ENCODE measurements at regions of chr4 and their contacts with region 1.

Region 1: DNA sequence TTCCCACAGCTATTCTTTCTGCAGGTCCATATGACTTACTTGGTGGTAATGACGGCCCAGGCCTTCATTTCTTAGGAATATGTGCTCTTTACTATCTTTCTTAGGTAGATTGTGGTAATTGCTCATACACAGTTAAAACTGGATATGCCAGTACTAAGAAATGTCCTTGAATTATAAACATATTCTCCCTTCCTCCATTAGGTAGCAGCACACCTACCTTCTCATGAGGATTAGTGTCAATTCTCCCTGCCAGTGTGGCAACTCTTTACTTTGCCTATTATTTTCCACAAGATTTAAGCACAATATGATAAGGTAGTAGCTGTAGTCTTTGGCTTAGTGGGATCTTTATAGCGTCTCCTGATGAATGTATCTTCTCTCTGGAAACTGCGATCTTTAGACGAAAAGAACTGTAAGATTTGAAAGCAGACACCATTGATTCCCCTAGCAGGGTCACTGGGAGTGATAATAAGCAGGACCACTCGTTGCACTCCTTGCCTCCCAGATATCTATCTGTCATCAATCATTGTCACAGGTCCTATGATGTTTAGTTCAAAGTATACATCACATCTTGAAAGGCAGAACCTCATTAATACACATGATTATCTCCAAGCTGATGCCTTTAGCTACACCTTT is 1240.7 kb downstream of the C4orf33 start:
- DNase-seq: no peak
- H3K4me3 ChIP-seq: no peak overlapping the region
- H3K27ac ChIP-seq: no peak overlapping the region
- H3K4me1 ChIP-seq: no peaks in the 10 kb centered on the region
- H3K27me3 ChIP-seq: no peaks in the 10 kb centered on the region
- CTCF ChIP-seq: no peak
- POLR2A ChIP-seq: no peak

Region 2: GRCh38 chr4:129916991-129917390 is 419.7 kb before region 1 on chr4:
- intact Hi-C with region 1: loop called (anchors 5 kb)
- DNase-seq: no peak
- H3K4me3 ChIP-seq: no peak overlapping the region
- H3K27ac ChIP-seq: no peak overlapping the region
- H3K4me1 ChIP-seq: no peaks in the 10 kb centered on the region
- H3K27me3 ChIP-seq: no peaks in the 10 kb centered on the region
- CTCF ChIP-seq: no peak
- POLR2A ChIP-seq: no peak